ENCODE measurements at regions of chr9 and their contacts with region 1.

Region 1: DNA sequence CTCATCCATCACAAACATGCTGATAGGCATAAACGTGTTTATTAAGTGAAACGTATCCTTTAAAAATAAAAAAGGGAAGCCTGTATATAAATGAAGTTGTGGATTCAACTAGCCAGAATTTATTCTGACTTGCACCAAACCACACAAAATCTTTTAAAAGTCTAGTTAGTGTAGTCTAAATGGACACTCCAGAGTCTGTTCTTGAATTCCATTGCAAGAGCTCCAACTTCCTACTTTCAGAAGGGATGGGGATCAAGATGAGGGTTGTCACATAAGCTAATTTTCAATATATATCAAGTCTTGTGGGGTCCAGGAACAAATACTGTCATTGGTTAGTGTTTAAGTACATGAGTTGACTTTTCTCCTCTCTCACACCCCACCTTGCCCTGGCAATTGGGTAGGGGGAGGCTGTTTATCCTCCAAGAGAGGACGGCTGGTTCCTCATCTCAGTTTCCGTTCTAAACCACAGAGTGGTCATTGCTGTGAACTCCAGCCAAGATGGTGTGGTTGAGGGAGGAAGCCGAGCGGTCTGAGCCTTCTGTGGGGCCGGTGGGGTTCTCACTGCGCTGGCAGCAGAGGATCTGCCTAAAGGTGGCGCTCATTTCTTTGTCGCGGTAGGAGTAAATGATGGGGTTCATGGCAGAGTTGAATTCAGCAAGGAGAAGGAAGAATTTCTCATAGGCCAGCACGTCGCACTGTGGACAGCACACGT is 163.2 kb downstream of the LPAR1 start:
- DNase-seq: no peak
- H3K4me3 ChIP-seq: no peak overlapping the region
- H3K27ac ChIP-seq: no peak overlapping the region
- H3K4me1 ChIP-seq: no peaks in the 10 kb centered on the region
- H3K27me3 ChIP-seq: no peaks in the 10 kb centered on the region
- CTCF ChIP-seq: peak in 1 of 3 experiments; percentile 7

Region 2: GRCh38 chr9:110777196-110777875 is 97.8 kb before region 1 on chr9:
- dilution Hi-C with region 1: loop called (anchors 25 kb)
- DNase-seq: no peak
- H3K4me3 ChIP-seq: no peak overlapping the region
- H3K27ac ChIP-seq: no peak overlapping the region
- H3K4me1 ChIP-seq: no peaks in the 10 kb centered on the region
- H3K27me3 ChIP-seq: no peaks in the 10 kb centered on the region
- CTCF ChIP-seq: no peak